ENCODE measurements at regions of chr5 and their contacts with region 1.

Region 1: DNA sequence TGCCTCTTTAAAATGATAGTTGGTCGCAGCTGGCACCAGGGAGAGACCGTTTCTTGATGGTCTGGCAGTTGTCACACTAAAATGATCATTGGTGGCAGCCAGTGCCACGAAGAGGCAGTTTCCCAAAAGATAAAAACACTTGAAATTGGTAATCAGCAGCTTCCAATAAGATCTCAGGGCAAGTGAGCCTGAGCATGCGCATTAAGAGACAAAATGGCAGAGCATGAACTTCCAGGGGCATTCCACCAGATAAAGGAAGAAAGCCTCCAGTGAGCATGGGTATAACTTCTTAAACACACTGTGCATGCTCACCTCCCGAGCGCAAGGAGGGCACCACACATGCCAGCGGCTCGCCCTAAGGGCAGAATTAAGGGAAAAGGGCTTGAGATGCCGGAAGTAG is 1594.2 kb upstream of the CDH9 start:
- DNase-seq: no peak
- H3K4me3 ChIP-seq: no peak overlapping the region
- H3K27ac ChIP-seq: no peak overlapping the region
- H3K4me1 ChIP-seq: no peaks in the 10 kb centered on the region
- H3K27me3 ChIP-seq: no peaks in the 10 kb centered on the region
- CTCF ChIP-seq: no peak
- POLR2A ChIP-seq: no peak

Region 2: DNA sequence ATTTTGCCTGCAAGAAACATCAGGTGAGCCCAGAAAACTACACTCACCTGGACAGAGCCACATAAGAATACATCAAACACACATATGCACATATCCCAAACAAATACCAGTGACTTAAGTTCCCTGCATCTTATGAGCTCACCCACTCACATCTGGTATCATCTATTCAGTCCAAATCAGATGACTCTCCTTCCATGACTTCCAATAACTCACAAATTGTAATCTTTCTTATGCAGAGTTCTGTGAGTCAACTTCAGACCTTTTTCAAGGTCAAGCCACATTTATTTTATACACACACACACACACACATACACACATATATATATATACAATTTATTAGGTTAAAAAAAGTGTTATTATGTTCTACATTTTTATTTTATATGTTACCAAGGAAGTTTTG is 117.6 kb after region 1 on chr5:
- intact Hi-C with region 1: loop called (anchors 5 kb)
- DNase-seq: no peak
- H3K4me3 ChIP-seq: no peak overlapping the region
- H3K27ac ChIP-seq: no peak overlapping the region
- H3K4me1 ChIP-seq: no peaks in the 10 kb centered on the region
- H3K27me3 ChIP-seq: no peaks in the 10 kb centered on the region
- CTCF ChIP-seq: no peak
- POLR2A ChIP-seq: no peak